Activated T-helper 1 cell treated with anti-CD3 and anti-CD28 coated beads, Interleukin-12 subunit alpha, Interleukin-12 subunit beta, Interleukin-2, Interleukin-4 antibody, amounts not matched to agents 30 ng/mL and 10 ng/mL and 1 ng/mL, durations not matched to agents 14 hours and 24 hours and 36 hours (primary cell): ENCODE measurements at regions of chrX and their contacts with region 1.

Region 1: GRCh38 chrX:11180571-11180970 is 69.4 kb downstream of the HCCS start:
- DNase-seq: no peak
- H3K4me3 Mint-ChIP-seq: no peak overlapping the region
- H3K27ac Mint-ChIP-seq: no peak overlapping the region
- H3K4me1 Mint-ChIP-seq: no peaks in the 10 kb centered on the region
- H3K27me3 Mint-ChIP-seq: no peaks in the 10 kb centered on the region

Region 2: GRCh38 chrX:11209798-11210414 is 29.3 kb after region 1 on chrX:
- intact Hi-C with region 1: loop called (anchors 1 kb)
- DNase-seq: no peak
- H3K4me3 Mint-ChIP-seq: no peak overlapping the region
- H3K27ac Mint-ChIP-seq: no peak overlapping the region
- H3K4me1 Mint-ChIP-seq: no peaks in the 10 kb centered on the region
- H3K27me3 Mint-ChIP-seq: no peaks in the 10 kb centered on the region